A673 (cell line): ENCODE measurements at regions of chr12 and their contacts with region 1.

Region 1: GRCh38 chr12:64729909-64730587 is 29.2 kb downstream of the GNS start:
- DNase-seq: no peak
- H3K4me3 ChIP-seq: no peak overlapping the region
- H3K27ac ChIP-seq: no peak overlapping the region
- H3K4me1 ChIP-seq: peaks cover 6% of the 10 kb centered on the region
- H3K27me3 ChIP-seq: no peaks in the 10 kb centered on the region
- CTCF ChIP-seq: no peak

Region 2: DNA sequence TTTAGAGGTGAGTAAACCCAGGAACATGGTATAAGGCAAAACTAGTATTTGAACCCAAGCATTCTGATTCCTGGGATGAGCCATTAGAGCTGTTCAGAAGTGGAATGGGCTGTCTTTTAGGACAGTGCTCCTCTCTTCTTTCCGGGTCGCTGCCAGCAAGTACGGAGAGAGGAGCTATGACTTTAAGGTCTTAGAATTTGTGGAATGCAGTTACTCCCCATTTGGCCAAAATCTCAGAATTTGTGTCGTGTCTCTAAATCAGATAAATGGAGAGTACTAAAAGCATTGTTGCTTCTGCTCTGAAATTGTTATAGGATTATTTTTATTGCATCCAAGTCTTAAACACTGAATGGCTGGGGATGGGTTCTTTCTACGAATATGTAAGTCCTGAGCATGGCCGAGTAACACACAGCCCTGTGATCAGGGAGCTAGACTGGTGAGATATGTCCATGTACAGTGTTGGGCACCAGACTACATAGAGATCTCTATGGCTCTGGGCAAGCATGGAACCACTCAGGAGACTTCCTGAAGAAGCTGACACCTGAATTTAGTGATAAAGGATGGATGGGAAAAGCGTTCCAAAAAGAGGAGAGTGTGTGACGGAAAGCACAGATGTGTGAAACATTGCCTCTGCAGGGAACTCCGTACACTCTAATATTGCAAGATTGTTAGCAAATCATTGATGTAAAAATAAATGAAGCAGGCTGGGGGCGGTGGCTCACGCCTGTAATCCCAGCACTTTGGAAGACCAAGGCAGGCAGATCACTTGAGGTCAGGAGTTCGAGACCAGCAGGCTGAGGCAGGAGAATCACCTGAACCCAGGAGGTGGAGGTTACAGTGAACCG is 700.8 kb before region 1 on chr12:
- CTCF ChIA-PET with region 1: no interaction called
- POLR2A ChIA-PET with region 1: interaction called, 19 read pairs
- intact Hi-C with region 1: no loop called
- DNase-seq: no peak
- H3K4me3 ChIP-seq: no peak overlapping the region
- H3K27ac ChIP-seq: no peak overlapping the region
- H3K4me1 ChIP-seq: no peaks in the 10 kb centered on the region
- H3K27me3 ChIP-seq: no peaks in the 10 kb centered on the region
- CTCF ChIP-seq: no peak

Region 3: GRCh38 chr12:64759035-64759901 is 29.2 kb after region 1 on chr12 and contains the start of gene GNS:
- CTCF ChIA-PET with region 1: no interaction called
- POLR2A ChIA-PET with region 1: no interaction called
- intact Hi-C with region 1: no loop called
- DNase-seq: peak; percentile 93
- H3K4me3 ChIP-seq: peak within 1 kb of the TSS; percentile 84
- H3K27ac ChIP-seq: peak within 1 kb of the TSS; percentile 64
- H3K4me1 ChIP-seq: no peaks in the 10 kb centered on the region
- H3K27me3 ChIP-seq: no peaks in the 10 kb centered on the region
- CTCF ChIP-seq: no peak
- total RNA-seq, gene GNS: 50.1 and 57.5 TPM in 2 replicates